A549 (cell line): ENCODE measurements at regions of chr17 and their contacts with region 1.

Region 1: DNA sequence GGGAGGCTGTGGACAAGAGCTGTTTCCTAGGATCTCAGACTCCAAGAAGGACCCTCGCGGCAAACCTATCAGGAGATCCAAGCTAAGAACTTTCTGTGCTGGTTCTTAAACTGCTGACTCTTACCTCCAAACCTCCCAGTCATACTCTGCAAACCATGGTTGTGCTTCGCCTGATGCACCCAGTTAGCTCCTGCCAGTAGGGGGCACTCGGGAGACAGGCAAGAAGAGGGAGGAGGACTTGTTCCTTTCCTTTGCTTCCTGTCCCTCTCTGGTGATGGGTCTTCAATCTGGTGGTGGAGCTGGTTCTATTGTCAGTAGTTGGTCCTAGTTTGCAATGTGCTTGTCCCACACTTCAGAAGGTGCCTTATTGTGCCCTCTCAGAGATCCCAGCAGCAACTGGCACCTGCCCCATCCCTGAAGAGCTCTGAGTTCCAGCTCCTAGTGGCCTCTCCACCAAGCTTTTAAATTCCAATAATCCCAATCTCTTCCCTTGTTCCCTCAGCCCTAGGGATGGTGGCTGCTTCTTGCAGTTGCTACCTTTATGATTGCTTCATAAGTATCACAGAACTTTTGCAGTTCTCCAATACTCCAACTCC is 113.5 kb upstream of the RPL38 start:
- DNase-seq: peak; percentile 52 to 79
- ATAC-seq: peak; percentile 52 to 90; a peak in 4 of 6 replicates
- H3K4me3 ChIP-seq: no peak overlapping the region
- H3K27ac ChIP-seq: no peak overlapping the region
- H3K4me1 ChIP-seq: no peaks in the 10 kb centered on the region
- CTCF ChIP-seq: peak; percentile 70
- EP300 ChIP-seq: no peak
- POLR2A ChIP-seq: no peak
- RAD21 ChIP-seq: peak; percentile 66 to 81

Region 2: DNA sequence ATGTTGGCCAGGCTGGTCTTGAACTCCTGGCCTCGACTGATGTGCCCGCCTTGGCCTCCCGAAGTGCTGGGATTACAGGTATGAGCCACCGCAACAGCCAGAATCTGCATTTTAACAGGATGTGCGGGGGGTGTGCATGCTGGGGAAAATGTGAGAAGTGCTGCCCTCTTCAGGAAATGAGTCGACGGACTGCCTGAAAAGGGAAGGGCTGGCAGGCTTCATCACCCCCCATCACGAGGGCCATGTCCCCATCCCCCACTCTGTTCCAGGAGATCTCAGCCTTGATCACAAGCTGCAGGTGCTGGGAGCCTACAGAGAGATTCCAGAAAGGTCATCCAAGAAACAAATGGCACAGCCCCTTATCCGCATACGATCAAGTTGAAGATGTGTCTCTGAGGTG is 81.8 kb before region 1 on chr17:
- CTCF ChIA-PET with region 1: no interaction called
- POLR2A ChIA-PET with region 1: no interaction called
- DNase-seq: peak; percentile 43 to 63
- ATAC-seq: peak; percentile 51 to 82; a peak in 3 of 6 replicates
- H3K4me3 ChIP-seq: no peak overlapping the region
- H3K27ac ChIP-seq: no peak overlapping the region
- H3K4me1 ChIP-seq: no peaks in the 10 kb centered on the region
- CTCF ChIP-seq: peak; percentile 43
- EP300 ChIP-seq: no peak
- POLR2A ChIP-seq: no peak
- RAD21 ChIP-seq: peak; percentile 39 to 45; a peak in 3 of 5 replicates

Region 3: GRCh38 chr17:74104921-74105320 is 15.0 kb after region 1 on chr17:
- CTCF ChIA-PET with region 1: interaction called, 16 read pairs
- POLR2A ChIA-PET with region 1: no interaction called
- DNase-seq: no peak
- ATAC-seq: no peak
- H3K4me3 ChIP-seq: no peak overlapping the region
- H3K27ac ChIP-seq: no peak overlapping the region
- H3K4me1 ChIP-seq: no peaks in the 10 kb centered on the region
- CTCF ChIP-seq: no peak
- EP300 ChIP-seq: no peak
- POLR2A ChIP-seq: no peak
- RAD21 ChIP-seq: no peak

Region 4: DNA sequence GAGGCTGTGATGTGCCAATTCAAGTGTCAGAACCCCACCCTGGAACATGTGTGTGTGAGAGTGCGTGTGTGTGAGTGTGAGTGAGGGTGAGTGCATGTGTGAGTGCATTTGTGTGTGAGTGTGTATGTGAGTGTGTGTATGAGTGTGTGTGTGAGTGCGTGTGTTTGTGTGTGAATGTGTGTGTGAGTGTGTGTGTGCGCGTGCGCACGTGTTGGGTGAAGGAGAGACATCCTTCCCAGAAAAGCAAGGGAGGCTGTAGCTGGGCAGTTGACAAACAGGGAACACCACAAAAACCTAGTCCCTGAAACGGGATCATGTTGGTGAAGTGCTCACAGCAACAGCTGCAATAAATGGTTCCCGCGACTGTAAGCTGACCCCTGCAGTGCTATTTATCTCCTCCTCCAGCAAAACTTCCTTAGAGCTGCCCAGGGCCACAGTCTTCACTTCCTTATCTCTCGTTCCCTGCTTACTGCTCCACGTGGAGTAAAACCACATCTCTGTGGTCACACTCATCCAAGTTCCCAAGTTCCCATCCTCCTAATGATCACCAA is 73.4 kb after region 1 on chr17:
- CTCF ChIA-PET with region 1: no interaction called
- POLR2A ChIA-PET with region 1: no interaction called
- DNase-seq: no peak
- ATAC-seq: peak; percentile 15 to 45; a peak in 3 of 6 replicates
- H3K4me3 ChIP-seq: no peak overlapping the region
- H3K27ac ChIP-seq: no peak overlapping the region
- H3K4me1 ChIP-seq: no peaks in the 10 kb centered on the region
- CTCF ChIP-seq: no peak
- EP300 ChIP-seq: no peak
- POLR2A ChIP-seq: no peak
- RAD21 ChIP-seq: no peak